Esophagus muscularis mucosa (tissue), 4 donors: ENCODE measurements at regions of chr12 and their contacts with region 1.

Region 1: DNA sequence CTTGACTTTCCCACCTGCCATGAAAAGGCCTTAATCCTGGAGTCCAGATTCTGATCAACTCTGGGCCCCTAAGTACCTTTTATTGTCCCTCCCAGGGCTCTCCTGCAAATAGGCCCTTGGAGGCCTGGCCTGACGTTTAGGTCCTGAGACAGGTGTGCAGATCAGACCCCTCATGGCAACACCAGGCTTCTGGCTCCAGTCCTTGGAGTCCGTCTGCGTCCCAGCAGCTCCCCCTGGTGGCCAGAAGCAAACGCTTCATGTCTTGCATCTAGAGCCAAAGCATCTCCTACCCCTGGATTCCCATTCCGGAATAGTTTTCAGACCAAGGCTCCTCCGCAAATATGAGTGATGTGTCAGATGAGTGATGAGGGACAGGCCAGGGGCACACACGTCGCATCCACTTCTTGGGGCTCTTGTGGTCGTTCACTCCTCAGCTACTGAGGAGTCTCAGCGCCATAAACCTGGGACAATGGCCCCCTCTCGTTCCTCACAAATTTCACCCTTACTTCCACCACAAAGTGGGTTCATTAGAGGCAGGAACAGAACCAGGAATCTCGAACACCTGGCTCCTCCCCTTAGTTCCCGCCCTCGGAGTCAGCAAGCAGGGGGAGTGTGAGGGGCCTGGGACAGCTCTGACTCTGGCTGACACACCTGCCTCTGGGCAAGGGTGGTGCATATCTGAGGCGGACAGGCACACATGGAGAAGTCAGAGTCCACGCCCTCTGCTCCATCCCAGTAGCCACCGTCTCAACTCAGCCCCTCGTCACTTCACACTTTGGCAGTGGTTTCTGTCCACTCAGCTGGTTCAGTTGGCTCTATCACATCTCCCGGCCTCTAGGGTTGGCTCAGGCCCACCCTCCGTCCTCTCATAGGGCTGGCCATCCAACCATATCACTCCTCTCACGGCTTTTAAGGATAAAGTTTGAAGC is 77.9 kb upstream of the PWP1 start:
- DNase-seq: no peak
- H3K4me3 ChIP-seq: no peak overlapping the region
- H3K27ac ChIP-seq: no peak overlapping the region
- H3K4me1 ChIP-seq: no peaks in the 10 kb centered on the region
- H3K27me3 ChIP-seq: peaks cover 0 to 22% (median 4%) of the 10 kb centered on the region in 4 donors
- CTCF ChIP-seq: peak; percentile 74 to 93 (median 85)
- EP300 ChIP-seq: no peak
- POLR2A ChIP-seq: no peak

Region 2: DNA sequence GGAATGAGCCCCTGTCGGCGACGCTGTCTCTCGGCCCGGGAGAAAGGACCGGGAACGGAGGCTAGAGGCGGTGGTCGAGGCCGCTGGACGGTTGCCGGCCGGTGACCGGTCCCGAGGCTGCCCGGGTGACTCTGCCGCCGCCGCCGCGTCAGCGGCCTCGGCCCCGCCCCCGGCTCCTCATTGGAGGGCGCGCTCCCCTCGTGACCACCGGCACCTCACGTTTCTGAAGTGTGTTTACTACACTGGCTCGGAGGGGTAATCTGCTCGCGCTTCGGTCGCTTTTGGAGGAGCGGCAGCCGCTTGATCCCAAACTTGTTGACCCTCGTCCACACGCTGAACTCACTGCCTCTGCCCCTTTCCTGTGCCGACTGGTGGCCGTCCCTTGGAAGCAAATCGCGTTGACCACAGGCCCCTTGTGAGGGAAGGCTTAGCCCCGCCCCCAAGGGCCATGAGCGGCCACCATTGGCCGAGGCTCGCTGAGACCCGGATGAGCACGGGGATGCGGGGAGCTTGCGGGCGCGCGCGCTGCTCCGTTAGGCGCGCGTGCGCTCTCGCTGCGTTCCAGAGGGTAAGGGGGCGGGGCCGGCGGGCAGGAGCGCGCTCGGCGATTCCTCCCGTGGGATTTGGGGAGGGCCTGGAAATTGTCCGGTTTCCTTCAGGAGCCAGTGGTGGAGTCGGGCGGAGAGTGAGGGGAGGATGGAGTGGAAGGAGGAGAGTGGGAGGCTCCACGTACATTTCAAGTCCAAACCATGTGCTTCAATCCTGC is 514.1 kb before region 1 on chr12 and contains the start of gene CRY1:
- intact Hi-C with region 1: no loop called
- DNase-seq: peak; percentile 99
- H3K4me3 ChIP-seq: peak within 1 kb of the TSS; percentile 80 to 93 (median 89)
- H3K27ac ChIP-seq: peak within 1 kb of the TSS; percentile 97 to 100 (median 98)
- H3K4me1 ChIP-seq: peaks cover 18 to 40% (median 34%) of the 10 kb centered on the region in 4 donors
- H3K27me3 ChIP-seq: no peaks in the 10 kb centered on the region
- CTCF ChIP-seq: no peak
- EP300 ChIP-seq: no peak
- POLR2A ChIP-seq: peak; percentile 94
- total RNA-seq, gene CRY1: 29.1 to 42.9 (median 34.9) TPM

Region 3: GRCh38 chr12:107131832-107132616 is 475.7 kb before region 1 on chr12:
- intact Hi-C with region 1: loop called (anchors 2 kb)
- DNase-seq: no peak
- H3K4me3 ChIP-seq: no peak overlapping the region
- H3K27ac ChIP-seq: no peak overlapping the region
- H3K4me1 ChIP-seq: peaks cover 0 to 3% (median 0%) of the 10 kb centered on the region in 4 donors
- H3K27me3 ChIP-seq: no peaks in the 10 kb centered on the region
- CTCF ChIP-seq: peak; percentile 68 to 77 (median 70)
- EP300 ChIP-seq: no peak
- POLR2A ChIP-seq: no peak

Region 4: DNA sequence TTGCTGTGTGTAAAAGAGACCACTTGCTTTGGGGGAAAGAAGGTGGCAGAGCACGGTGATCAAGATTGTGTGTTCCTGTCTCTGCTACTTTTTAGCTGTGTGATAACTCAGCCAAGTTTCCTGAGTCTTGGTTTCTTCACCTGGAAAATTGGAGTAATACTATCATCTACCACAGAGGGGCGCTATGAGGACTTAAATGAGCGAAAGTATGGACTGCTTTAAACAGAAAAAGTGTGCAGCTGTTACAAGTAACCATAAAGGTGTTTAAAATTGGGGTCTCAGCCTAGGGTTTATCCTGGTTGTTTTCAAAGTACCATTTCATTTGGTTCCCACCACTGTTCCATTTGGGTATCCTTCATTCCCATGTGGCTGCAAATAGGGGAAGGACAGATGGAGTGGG is 455.5 kb after region 1 on chr12:
- intact Hi-C with region 1: no loop called
- DNase-seq: no peak
- H3K4me3 ChIP-seq: no peak overlapping the region
- H3K27ac ChIP-seq: no peak overlapping the region
- H3K4me1 ChIP-seq: no peaks in the 10 kb centered on the region
- H3K27me3 ChIP-seq: peaks cover 0 to 4% (median 0%) of the 10 kb centered on the region in 4 donors
- CTCF ChIP-seq: peak in 1 of 3 experiments; percentile 7
- EP300 ChIP-seq: no peak
- POLR2A ChIP-seq: no peak